ACHN (cell line): ENCODE measurements at regions of chr10 and their contacts with region 1.

Region 1: GRCh38 chr10:77173615-77174461 is 463.8 kb downstream of the KCNMA1 start:
- DNase-seq: peak; percentile 83

Region 2: GRCh38 chr10:77290528-77291155 is 116.8 kb after region 1 on chr10:
- in situ Hi-C with region 1: no loop called
- DNase-seq: peak; percentile 99

Region 3: DNA sequence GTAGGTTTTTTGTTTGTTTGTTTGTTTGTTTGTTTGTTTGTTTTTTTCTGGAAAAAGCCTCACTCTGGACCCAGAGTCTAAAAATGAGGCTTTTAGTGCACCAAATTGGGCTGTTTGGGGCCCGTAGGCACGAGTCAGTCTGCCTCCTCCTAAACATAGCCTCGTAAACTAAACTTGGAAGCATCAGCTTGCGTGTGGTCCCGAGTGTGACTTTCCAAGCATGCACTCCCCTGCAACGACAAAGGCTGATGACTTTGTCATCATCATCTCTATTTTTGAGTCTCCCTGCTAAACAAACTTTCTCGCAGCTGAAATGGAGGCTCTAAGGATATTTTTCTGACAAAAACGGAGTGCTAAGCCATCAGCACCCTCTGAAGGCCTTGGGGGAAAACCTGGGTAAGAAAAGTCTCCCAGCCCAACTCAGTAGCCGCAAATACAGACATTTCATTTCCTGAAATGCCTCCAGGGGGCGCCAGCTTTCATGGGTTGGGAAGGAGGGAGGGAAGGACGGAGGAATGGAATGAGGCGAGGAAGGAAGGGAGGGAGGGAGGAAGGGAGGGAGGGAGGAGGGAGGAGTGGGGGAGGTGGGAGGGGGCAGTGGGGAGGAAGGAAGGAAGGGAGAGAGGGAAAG is 217.9 kb after region 1 on chr10:
- in situ Hi-C with region 1: no loop called
- DNase-seq: peak; percentile 95

Region 4: DNA sequence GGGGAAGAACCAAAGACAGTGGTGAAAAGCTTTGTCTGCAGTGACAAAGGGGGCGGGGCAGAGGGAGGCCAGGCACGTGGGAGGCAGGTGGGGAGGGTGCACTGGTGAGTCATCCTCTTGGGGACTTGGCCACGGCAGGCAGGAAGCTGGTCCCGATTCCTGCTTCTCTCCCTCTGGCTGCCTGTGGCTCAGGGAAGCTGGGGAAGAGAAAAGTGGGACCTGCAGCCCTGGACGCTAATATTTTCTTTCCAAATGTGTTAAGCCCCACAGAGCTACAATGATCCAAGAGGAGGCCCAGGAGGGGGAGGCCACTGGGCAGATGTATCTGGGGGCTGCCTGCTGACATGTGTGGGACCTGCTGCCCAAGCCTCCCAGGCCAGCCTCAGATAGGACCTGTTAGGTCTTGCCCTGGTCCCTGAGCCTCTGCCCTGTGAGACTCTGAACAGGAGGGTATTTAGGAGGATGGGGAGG is 232.0 kb after region 1 on chr10:
- in situ Hi-C with region 1: loop called (anchors 25 kb)
- DNase-seq: peak; percentile 91